SK-N-SH (cell line): ENCODE measurements at regions of chr6 and their contacts with region 1.

Region 1: GRCh38 chr6:12911387-12911960 is 194.9 kb downstream of the PHACTR1 start:
- DNase-seq: peak; percentile 46
- H3K4me3 ChIP-seq: no peak overlapping the region; a peak in 1 of 4 replicates
- H3K27ac ChIP-seq: no peak overlapping the region
- H3K4me1 ChIP-seq: no peaks in the 10 kb centered on the region
- H3K27me3 ChIP-seq: no peaks in the 10 kb centered on the region
- CTCF ChIP-seq: peak; percentile 59
- EP300 ChIP-seq: no peak
- RAD21 ChIP-seq: peak; percentile 91

Region 2: GRCh38 chr6:12423832-12424231 is 487.6 kb before region 1 on chr6:
- CTCF ChIA-PET with region 1: no interaction called
- POLR2A ChIA-PET with region 1: no interaction called
- DNase-seq: no peak
- H3K4me3 ChIP-seq: no peak overlapping the region
- H3K27ac ChIP-seq: no peak overlapping the region
- H3K4me1 ChIP-seq: no peaks in the 10 kb centered on the region; a peak in 1 of 4 replicates
- H3K27me3 ChIP-seq: no peaks in the 10 kb centered on the region
- CTCF ChIP-seq: no peak
- EP300 ChIP-seq: no peak
- RAD21 ChIP-seq: no peak

Region 3: DNA sequence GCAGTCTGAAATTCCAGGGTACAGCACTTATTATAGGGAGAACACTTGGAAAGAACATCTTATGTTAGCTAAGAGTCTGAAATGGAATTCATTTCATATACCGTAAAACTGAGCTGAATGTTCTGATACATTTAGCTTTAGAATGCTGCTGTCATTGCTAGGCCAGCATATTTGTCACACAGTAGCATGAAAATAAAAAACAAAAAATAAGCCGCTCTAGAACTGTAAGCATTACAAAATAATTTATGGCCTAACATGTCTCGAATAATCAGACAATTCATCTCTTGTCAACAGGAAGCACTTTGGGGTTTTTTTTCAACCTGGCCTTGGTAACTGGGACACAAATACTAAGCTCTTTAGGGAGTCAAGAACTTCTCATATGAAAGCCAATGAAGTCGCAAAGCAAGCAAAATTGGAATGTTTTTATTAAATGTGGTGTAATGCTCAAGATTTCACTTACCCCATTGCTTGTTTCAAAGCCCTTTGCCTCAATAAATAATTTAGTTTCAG is 79.2 kb before region 1 on chr6:
- CTCF ChIA-PET with region 1: no interaction called
- POLR2A ChIA-PET with region 1: no interaction called
- DNase-seq: no peak
- H3K4me3 ChIP-seq: no peak overlapping the region
- H3K27ac ChIP-seq: no peak overlapping the region
- H3K4me1 ChIP-seq: no peaks in the 10 kb centered on the region
- H3K27me3 ChIP-seq: no peaks in the 10 kb centered on the region
- CTCF ChIP-seq: no peak
- EP300 ChIP-seq: no peak
- RAD21 ChIP-seq: no peak

Region 4: GRCh38 chr6:12973386-12973785 is 61.9 kb after region 1 on chr6:
- CTCF ChIA-PET with region 1: interaction called, 13 read pairs
- POLR2A ChIA-PET with region 1: no interaction called
- DNase-seq: peak; percentile 49
- H3K4me3 ChIP-seq: no peak overlapping the region
- H3K27ac ChIP-seq: peak overlapping the region in 1 of 2 experiments; percentile 86; a peak in 2 of 4 replicates
- H3K4me1 ChIP-seq: peaks cover 0 to 14% of the 10 kb centered on the region in 2 experiments; a peak in 2 of 4 replicates
- H3K27me3 ChIP-seq: no peaks in the 10 kb centered on the region
- CTCF ChIP-seq: no peak
- EP300 ChIP-seq: peak in 1 of 2 experiments; percentile 79; a peak in 2 of 4 replicates
- RAD21 ChIP-seq: peak; percentile 19; the same call in 1 of the 2 replicates

Region 5: DNA sequence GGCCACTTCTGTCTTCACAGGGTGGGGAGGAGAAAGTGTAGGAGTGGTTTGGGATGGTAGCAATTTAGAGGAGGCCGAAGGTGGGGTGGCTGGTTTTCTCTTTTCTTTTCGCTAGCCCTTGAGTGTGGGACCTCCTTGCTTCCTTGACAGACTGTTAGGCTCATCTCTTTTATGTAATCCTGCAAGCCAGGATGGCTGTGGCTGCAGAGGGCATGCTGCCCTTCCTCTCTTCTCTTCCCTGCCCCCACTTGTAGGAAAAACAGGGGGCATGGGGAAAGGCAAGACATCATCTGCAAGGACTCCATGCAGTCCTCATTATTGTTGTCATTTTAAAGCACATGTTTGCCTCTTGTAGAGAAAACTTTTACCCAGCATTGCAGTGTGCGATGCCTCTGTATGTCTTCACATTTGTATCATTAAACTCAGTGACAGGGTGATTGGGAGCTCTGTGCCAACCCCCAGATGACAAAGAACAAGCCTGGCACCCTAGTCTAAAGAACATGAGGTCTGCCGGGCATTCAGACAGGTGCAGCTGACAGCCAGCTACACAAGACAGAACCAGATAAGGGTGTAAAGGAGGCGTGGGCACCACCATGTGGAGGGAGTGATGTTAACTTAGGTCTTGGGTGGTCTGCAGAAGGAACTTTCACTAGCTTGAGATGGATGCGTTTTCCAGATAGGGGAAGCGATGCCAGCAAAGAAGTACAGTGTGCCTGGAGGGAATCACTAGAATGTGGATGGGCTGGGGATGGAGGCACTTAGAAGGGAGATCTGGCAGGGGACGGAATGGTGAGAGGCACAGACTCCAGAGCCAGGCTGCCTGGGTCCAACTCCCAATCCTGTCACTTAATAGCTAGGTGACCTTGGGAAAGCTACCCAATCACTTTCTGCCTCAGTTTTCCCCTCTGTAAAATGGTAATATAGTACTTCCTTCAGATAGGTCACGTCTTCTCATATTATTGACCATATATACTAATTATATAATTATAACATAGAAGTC is 209.3 kb after region 1 on chr6:
- CTCF ChIA-PET with region 1: interaction called, 27 read pairs
- POLR2A ChIA-PET with region 1: no interaction called
- DNase-seq: peak; percentile 26
- H3K4me3 ChIP-seq: no peak overlapping the region
- H3K27ac ChIP-seq: no peak overlapping the region
- H3K4me1 ChIP-seq: peaks cover 0 to 10% of the 10 kb centered on the region in 2 experiments; a peak in 2 of 4 replicates
- H3K27me3 ChIP-seq: no peaks in the 10 kb centered on the region
- CTCF ChIP-seq: no peak
- EP300 ChIP-seq: no peak
- RAD21 ChIP-seq: peak; percentile 58

Region 6: DNA sequence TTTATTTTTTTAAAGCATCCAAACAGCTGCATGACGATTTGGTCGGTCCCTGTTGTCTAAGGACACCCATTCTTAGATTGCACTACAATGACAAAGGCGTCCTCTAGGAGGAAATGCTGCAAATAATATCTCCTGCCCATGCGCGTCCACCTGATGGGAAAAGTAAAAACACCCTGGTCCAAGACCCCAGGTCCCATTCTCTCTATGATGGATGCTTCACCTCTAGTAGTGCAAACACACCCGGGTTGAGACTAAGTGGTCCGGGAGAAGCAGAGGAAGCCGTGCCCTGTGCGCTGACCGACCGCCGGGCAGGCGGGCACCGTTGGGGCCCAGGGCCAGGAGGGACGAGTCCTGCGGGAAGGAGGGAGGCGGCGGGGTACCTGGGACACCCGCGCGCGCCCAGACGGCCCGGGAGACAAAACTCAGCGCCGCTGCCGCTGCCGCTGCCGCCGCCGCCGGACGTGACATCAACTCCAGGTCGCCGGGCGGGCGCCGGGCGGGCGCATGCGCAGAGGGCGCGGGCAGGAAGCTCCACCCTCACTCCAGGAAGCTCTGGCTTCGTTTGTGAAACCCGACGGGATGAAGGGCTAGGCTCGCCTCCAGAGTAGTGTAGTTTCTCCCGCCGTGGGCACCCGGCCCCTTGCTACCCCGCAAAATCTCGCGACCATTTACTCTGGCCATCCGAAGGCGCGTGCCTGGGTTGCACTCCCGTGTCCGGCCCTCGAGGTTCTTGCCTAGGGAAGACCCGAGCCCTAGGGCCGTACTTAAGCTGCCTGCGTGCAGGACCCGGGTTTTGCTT is 416.8 kb after region 1 on chr6 and contains the start of gene TBC1D7:
- CTCF ChIA-PET with region 1: interaction called, 143 read pairs
- POLR2A ChIA-PET with region 1: interaction called, 18 read pairs
- DNase-seq: peak; percentile 94
- H3K4me3 ChIP-seq: peak within 1 kb of the TSS; percentile 88 to 96
- H3K27ac ChIP-seq: peak within 1 kb of the TSS; percentile 86 to 97
- H3K4me1 ChIP-seq: peaks cover 4 to 12% of the 10 kb centered on the region in 2 experiments; a peak in 3 of 4 replicates
- H3K27me3 ChIP-seq: no peaks in the 10 kb centered on the region
- CTCF ChIP-seq: peak; percentile 24; the same call in 1 of the 2 replicates
- EP300 ChIP-seq: no peak
- RAD21 ChIP-seq: 0 out of 2 replicates have a peak, but pooled peaks have one; percentile 10
- polyA plus RNA-seq, gene TBC1D7: 25.2 and 27.5 TPM in 2 replicates